ENCODE measurements at regions of chr5 and their contacts with region 1.

Region 1: DNA sequence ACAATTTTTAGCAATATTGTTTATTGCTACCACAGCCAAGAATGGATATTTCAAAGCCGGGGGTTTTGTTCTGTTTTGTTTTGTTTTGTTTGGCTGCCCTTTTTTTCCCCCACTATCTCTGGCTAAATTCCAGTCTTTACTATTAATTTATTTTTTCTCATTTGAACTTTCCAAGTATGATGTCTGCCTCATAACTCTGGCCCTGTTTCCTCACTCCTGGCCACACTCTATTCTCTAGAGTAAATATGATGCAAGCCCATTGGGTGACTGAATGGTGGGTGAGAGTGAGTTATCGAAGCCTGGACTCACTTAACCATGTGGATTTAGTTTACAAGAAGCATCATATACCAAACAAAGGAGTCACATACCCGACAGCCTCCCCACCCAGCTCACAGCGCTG is 41.9 kb downstream of the WDR36 start:
- DNase-seq: no peak
- ATAC-seq: no peak
- H3K4me3 ChIP-seq: no peak overlapping the region
- H3K4me3 Mint-ChIP-seq: no peak overlapping the region
- H3K27ac ChIP-seq: no peak overlapping the region
- H3K27ac Mint-ChIP-seq: no peak overlapping the region
- H3K4me1 ChIP-seq: no peaks in the 10 kb centered on the region
- H3K4me1 Mint-ChIP-seq: peaks cover 0 to 6% (median 3%) of the 10 kb centered on the region in 7 donors
- H3K27me3 ChIP-seq: no peaks in the 10 kb centered on the region
- H3K27me3 Mint-ChIP-seq: peaks cover 0 to 5% (median 0%) of the 10 kb centered on the region in 5 donors

Region 2: DNA sequence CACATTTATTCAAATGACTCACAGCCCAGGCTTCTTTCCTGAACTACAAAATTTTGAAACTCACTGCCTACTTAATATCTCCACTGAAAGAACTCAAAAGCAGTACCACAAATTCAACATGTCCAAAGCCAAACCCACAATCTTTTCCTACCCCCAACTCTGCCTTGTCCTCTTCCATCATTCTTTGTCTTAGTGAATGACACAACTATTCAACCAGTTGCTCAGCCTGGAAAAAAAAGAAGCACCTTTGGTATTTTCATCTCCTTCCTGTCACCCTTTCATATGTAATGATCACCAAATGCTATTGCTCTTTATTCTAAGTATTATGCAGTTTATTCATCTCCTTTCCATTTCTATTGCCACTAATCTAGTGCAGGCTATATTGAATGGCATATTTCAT is 623.9 kb before region 1 on chr5:
- CTCF ChIA-PET with region 1: no interaction called
- POLR2A ChIA-PET with region 1: no interaction called
- intact Hi-C with region 1: no loop called
- DNase-seq: no peak
- ATAC-seq: no peak
- H3K4me3 ChIP-seq: no peak overlapping the region
- H3K4me3 Mint-ChIP-seq: no peak overlapping the region
- H3K27ac ChIP-seq: no peak overlapping the region
- H3K27ac Mint-ChIP-seq: no peak overlapping the region
- H3K4me1 ChIP-seq: no peaks in the 10 kb centered on the region
- H3K4me1 Mint-ChIP-seq: no peaks in the 10 kb centered on the region
- H3K27me3 ChIP-seq: no peaks in the 10 kb centered on the region
- H3K27me3 Mint-ChIP-seq: peaks cover 0 to 12% (median 8%) of the 10 kb centered on the region in 5 donors

Region 3: GRCh38 chr5:111116550-111116949 is 17.5 kb before region 1 on chr5:
- CTCF ChIA-PET with region 1: no interaction called
- POLR2A ChIA-PET with region 1: no interaction called
- intact Hi-C with region 1: no loop called
- DNase-seq: no peak
- ATAC-seq: peak; percentile 57
- H3K4me3 ChIP-seq: no peak overlapping the region
- H3K4me3 Mint-ChIP-seq: no peak overlapping the region
- H3K27ac ChIP-seq: no peak overlapping the region
- H3K27ac Mint-ChIP-seq: no peak overlapping the region
- H3K4me1 ChIP-seq: no peaks in the 10 kb centered on the region
- H3K4me1 Mint-ChIP-seq: peaks cover 0 to 9% (median 0%) of the 10 kb centered on the region in 7 donors
- H3K27me3 ChIP-seq: no peaks in the 10 kb centered on the region
- H3K27me3 Mint-ChIP-seq: no peaks in the 10 kb centered on the region

Region 4: DNA sequence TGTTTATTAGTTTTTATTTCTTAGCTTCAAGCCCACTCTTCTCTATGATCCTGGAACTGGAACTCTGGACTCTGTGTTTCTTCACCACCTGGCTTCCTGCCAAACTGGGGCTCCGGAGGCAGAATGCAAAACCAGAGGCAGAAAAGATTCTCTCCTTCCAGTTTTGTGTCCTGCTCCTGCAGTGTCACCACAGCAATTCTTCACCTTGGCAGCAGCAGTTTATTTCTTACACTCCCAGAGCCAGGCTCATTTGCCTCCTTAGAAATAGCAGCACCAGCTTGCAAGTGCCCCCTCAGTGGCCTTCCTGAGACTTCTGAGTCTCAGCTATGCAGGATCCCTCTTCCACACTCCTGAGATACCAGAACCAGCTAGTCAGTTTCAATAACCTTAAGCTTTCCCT is 63.4 kb after region 1 on chr5:
- CTCF ChIA-PET with region 1: no interaction called
- POLR2A ChIA-PET with region 1: no interaction called
- intact Hi-C with region 1: no loop called
- DNase-seq: no peak
- ATAC-seq: no peak
- H3K4me3 ChIP-seq: no peak overlapping the region
- H3K4me3 Mint-ChIP-seq: no peak overlapping the region
- H3K27ac ChIP-seq: no peak overlapping the region
- H3K27ac Mint-ChIP-seq: no peak overlapping the region
- H3K4me1 ChIP-seq: no peaks in the 10 kb centered on the region
- H3K4me1 Mint-ChIP-seq: peaks cover 0 to 13% (median 8%) of the 10 kb centered on the region in 7 donors
- H3K27me3 ChIP-seq: no peaks in the 10 kb centered on the region
- H3K27me3 Mint-ChIP-seq: peaks cover 0 to 30% (median 0%) of the 10 kb centered on the region in 5 donors

Region 5: GRCh38 chr5:112401924-112402323 is 1267.8 kb after region 1 on chr5:
- CTCF ChIA-PET with region 1: no interaction called
- POLR2A ChIA-PET with region 1: no interaction called
- intact Hi-C with region 1: loop called in 1 of 2 experiments (anchors 5 kb)
- DNase-seq: no peak
- ATAC-seq: no peak
- H3K4me3 ChIP-seq: no peak overlapping the region
- H3K4me3 Mint-ChIP-seq: peak overlapping the region in 1 of 10 donors; percentile 2
- H3K27ac ChIP-seq: no peak overlapping the region
- H3K27ac Mint-ChIP-seq: no peak overlapping the region
- H3K4me1 ChIP-seq: no peaks in the 10 kb centered on the region
- H3K4me1 Mint-ChIP-seq: no peaks in the 10 kb centered on the region
- H3K27me3 ChIP-seq: no peaks in the 10 kb centered on the region
- H3K27me3 Mint-ChIP-seq: peaks cover 14 to 41% (median 35%) of the 10 kb centered on the region in 5 donors

Measured in naive thymus-derived CD4-positive, alpha-beta T cell (primary cell).